AG04449 (cell line): ENCODE measurements at regions of chrX and their contacts with region 1.

Region 1: GRCh38 chrX:108070891-108071290 is 20.5 kb downstream of the PSMD10 start:
- DNase-seq: no peak
- H3K4me3 ChIP-seq: no peak overlapping the region
- CTCF ChIP-seq: no peak

Region 2: DNA sequence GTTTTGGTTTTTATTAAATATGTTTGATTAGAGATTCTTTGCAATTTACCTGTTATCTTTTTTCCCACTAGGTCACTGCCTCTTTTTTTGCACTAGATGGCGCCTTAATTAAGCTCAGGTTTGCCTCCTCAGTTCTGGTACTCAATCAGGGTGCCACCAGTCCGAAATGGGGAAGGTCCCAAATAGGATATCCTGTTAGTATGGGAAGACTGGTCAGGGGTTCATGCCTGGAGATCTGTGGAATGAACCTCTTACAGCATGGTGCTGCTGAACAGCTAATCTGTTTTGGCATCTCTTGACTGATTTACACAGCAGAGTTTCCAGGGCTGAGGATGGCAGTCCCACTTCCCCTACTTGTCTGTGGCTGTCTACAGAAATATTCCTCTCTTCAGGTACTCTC is 50.3 kb before region 1 on chrX:
- CTCF ChIA-PET with region 1: interaction called, 29 read pairs
- POLR2A ChIA-PET with region 1: no interaction called
- DNase-seq: no peak
- H3K4me3 ChIP-seq: no peak overlapping the region
- CTCF ChIP-seq: no peak

Region 3: DNA sequence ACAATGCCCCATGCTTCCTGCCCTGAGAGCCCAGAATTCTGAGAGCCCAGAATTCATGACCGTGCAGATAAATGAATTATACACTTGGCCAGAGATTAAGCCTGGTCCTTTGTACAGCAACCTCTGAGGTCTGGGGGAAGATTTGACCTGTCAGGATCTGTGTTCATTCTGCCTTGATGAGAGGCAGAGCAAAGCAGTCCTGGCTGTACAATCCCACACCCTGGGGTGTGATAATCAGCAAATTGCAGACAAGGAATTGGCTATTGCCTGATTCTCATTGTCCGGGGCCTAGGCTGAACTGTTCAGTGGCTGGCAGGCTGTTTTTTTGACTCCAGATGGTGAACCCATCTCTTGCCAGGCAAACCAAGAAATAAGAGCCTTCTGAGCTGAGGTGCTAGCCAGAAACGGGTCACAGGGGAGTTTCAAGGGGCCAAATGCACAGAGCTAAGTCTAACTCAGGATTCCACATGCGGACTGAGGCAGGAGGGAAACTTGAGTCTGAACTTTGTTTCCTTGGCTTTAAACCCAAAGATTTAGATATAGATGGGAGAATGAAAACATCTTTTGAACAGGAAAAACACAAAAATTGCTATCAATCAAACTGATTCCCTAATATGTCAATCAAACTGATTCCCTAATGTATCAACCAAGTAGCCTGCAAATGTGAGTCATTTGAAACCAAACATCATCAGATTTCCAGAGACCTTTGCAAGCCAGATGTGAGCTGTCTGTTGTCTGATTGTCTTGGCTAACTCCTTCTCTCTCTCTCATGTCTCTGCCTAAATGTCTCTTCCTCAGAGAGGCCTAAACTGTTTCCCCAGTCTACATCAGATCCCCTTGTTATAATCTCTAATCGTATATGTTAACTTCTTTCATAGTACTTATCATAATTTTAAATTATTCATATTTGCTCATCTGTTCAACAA is 180.0 kb after region 1 on chrX:
- CTCF ChIA-PET with region 1: no interaction called
- POLR2A ChIA-PET with region 1: no interaction called
- DNase-seq: no peak
- H3K4me3 ChIP-seq: no peak overlapping the region
- CTCF ChIP-seq: no peak